ENCODE measurements at regions of chr15 and their contacts with region 1.

Region 1: DNA sequence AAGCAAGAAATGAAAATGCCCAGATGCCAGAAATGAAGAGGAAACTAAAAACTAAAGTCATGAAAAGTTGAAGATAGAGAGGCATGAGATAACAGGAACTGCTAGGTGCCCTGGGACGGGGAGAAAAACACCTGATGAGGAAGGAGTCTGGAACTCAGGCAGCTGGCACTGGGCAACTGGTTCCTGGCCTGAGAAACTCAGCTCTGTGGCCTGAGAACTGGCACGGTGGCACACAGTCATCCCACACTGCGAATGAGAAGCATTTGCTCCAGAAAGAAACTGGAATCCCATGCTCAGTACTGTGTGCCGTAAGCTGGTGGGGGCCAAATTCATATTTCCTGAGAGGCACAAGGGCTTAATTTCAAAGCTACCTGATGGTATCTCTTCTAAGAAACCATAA is 53.6 kb upstream of the RORA start:
- DNase-seq: no peak
- ATAC-seq: no peak
- H3K4me3 ChIP-seq: no peak overlapping the region
- H3K27ac ChIP-seq: no peak overlapping the region
- H3K4me1 ChIP-seq: no peaks in the 10 kb centered on the region
- H3K27me3 ChIP-seq: peaks cover 0 to 29% (median 5%) of the 10 kb centered on the region in 7 donors
- CTCF ChIP-seq: no peak

Region 2: DNA sequence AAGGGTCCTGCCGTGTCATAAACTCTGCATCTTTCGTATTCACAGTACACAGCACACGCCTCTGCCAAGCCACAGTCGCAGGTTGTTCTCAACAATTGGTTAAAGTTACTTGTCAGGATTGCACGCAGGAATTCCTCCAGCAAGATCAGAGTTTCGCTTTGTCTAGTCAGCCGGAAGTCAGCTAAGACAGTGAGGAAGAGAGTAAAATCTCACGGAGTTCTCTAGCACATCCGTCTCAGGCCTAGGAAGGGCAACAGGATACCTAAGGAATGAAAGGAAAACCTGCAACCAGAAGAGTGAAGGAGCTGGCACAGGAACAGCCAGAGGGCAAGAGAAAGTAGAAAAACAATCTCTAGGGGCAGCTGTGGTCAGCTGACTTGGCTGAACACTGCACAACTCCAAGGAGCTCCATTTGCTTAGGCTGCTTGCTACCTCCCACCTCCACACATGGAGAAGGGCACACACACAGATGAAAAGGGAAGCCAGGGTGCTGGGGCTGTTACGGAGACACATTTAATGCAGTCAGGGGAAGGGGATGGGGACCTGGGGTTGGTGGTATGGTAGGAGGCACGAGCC is 77.2 kb before region 1 on chr15:
- intact Hi-C with region 1: no loop called
- DNase-seq: no peak
- ATAC-seq: peak in 3 of 8 donors; percentile 44 to 51 (median 46)
- H3K4me3 ChIP-seq: peak overlapping the region in 8 of 10 donors; percentile 7 to 42 (median 27)
- H3K27ac ChIP-seq: peak overlapping the region in 4 of 10 donors; percentile 34 to 44 (median 40)
- H3K4me1 ChIP-seq: peaks cover 0 to 15% (median 0%) of the 10 kb centered on the region in 9 donors
- H3K27me3 ChIP-seq: no peaks in the 10 kb centered on the region
- CTCF ChIP-seq: no peak

Region 3: GRCh38 chr15:61342390-61342789 is 59.7 kb after region 1 on chr15:
- intact Hi-C with region 1: loop called in 1 of 10 experiments (anchors 10 kb)
- DNase-seq: no peak
- ATAC-seq: no peak
- H3K4me3 ChIP-seq: no peak overlapping the region
- H3K27ac ChIP-seq: no peak overlapping the region
- H3K4me1 ChIP-seq: no peaks in the 10 kb centered on the region
- H3K27me3 ChIP-seq: peaks cover 0 to 13% (median 0%) of the 10 kb centered on the region in 7 donors
- CTCF ChIP-seq: no peak

Measured in heart right ventricle (tissue), 16 donors.